MCF 10A (cell line): ENCODE measurements at regions of chr1 and their contacts with region 1.

Region 1: GRCh38 chr1:213015099-213016050 is at the start of gene ANGEL2:
- DNase-seq: peak; percentile 100
- H3K4me3 Mint-ChIP-seq: peak within 1 kb of the TSS; percentile 91
- H3K27ac Mint-ChIP-seq: peak within 1 kb of the TSS; percentile 84
- H3K4me1 Mint-ChIP-seq: peaks cover 13% of the 10 kb centered on the region
- H3K27me3 Mint-ChIP-seq: no peaks in the 10 kb centered on the region
- CTCF ChIP-seq: no peak
- total RNA-seq, gene ANGEL2: 87.1 and 89.7 TPM in 2 replicates

Region 2: GRCh38 chr1:213003256-213003655 is 12.1 kb before region 1 on chr1:
- CTCF ChIA-PET with region 1: interaction called, 9 read pairs
- POLR2A ChIA-PET with region 1: interaction called, 32 read pairs
- intact Hi-C with region 1: no loop called
- DNase-seq: no peak
- H3K4me3 Mint-ChIP-seq: no peak overlapping the region
- H3K27ac Mint-ChIP-seq: no peak overlapping the region
- H3K4me1 Mint-ChIP-seq: no peaks in the 10 kb centered on the region
- H3K27me3 Mint-ChIP-seq: no peaks in the 10 kb centered on the region
- CTCF ChIP-seq: no peak

Region 3: DNA sequence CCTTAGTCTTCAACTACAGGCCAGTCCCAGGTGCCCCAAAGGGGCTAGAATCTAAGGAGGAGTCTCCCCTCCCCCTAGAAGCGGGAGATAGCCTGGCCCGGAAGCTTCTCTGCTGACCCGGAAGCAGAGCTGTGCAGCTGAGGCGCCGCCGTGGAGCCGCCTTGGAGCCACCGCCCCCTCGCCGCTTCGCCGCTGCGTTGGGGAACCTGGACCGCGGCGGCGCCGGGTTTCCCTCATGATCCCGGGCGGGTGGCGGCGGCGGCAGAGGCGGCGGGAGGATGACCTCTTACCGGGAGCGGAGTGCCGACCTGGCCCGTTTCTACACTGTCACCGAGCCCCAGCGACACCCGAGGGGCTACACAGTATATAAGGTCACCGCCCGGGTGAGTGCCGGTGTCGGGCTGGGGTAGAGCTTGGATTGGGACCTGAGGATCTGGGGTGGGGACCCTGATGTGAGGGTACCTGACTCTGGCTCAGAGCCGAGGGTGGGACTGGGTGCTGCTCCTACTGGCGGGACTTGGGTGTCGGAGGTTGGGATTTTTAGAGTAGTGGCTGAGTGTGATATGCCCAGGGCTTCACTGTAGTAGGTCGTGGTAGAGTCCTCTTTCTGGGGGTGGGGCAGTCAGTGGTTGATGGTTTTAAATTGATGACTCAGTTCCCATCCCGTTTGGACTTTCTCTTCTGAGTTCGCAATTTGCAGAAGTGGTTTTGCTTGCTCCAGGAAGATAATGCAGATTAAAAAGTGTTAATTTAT is 35.9 kb after region 1 on chr1 and contains the start of gene RPS6KC1:
- CTCF ChIA-PET with region 1: interaction called, 4 read pairs
- POLR2A ChIA-PET with region 1: interaction called, 25 read pairs
- intact Hi-C with region 1: loop called (anchors 1 kb)
- DNase-seq: peak; percentile 92
- H3K4me3 Mint-ChIP-seq: peak within 1 kb of the TSS; percentile 94
- H3K27ac Mint-ChIP-seq: peak within 1 kb of the TSS; percentile 95
- H3K4me1 Mint-ChIP-seq: peaks cover 22% of the 10 kb centered on the region
- H3K27me3 Mint-ChIP-seq: no peaks in the 10 kb centered on the region
- CTCF ChIP-seq: peak; percentile 15
- total RNA-seq, gene RPS6KC1: 24.5 and 24.9 TPM in 2 replicates

Region 4: DNA sequence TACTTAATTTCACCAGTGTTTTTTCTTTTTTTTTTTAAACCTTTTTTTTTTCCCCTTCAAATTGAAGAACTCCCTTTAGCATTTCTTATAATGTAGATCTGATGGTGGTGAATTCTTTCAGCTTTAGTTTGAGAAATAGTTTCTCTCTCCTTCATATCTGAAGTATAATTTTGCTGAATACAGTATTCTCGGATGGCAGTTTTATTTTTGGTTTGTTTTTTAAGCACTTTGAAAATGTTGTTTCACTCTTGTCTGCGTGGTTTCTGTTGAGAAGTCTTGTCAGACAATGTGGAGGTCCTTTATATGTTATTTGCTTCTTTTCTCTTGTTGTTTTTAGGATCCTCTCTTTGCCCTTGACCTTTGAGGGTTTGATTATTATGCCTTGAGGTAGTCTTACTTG is 170.8 kb after region 1 on chr1:
- CTCF ChIA-PET with region 1: no interaction called
- POLR2A ChIA-PET with region 1: no interaction called
- intact Hi-C with region 1: no loop called
- DNase-seq: no peak
- H3K4me3 Mint-ChIP-seq: no peak overlapping the region
- H3K27ac Mint-ChIP-seq: peak overlapping the region; percentile 18
- H3K4me1 Mint-ChIP-seq: no peaks in the 10 kb centered on the region
- H3K27me3 Mint-ChIP-seq: no peaks in the 10 kb centered on the region
- CTCF ChIP-seq: no peak